Common myeloid progenitor, CD34-positive (primary cell): ENCODE measurements at regions of chr12 and their contacts with region 1.

Region 1: GRCh38 chr12:24997970-24998582 is 49.2 kb upstream of the BCAT1 start:
- DNase-seq: peak in 2 of 3 donors; percentile 21 to 50
- H3K4me3 ChIP-seq: no peak overlapping the region
- H3K27ac ChIP-seq: no peak overlapping the region
- H3K4me1 ChIP-seq: peaks cover 0 to 8% (median 0%) of the 10 kb centered on the region in 4 experiments
- H3K27me3 ChIP-seq: no peaks in the 10 kb centered on the region

Region 2: GRCh38 chr12:25009496-25010092 is 11.5 kb after region 1 on chr12:
- CTCF ChIA-PET with region 1: interaction called, 12 read pairs
- POLR2A ChIA-PET with region 1: no interaction called
- DNase-seq: no peak
- H3K4me3 ChIP-seq: no peak overlapping the region
- H3K27ac ChIP-seq: no peak overlapping the region
- H3K4me1 ChIP-seq: no peaks in the 10 kb centered on the region
- H3K27me3 ChIP-seq: no peaks in the 10 kb centered on the region

Region 3: DNA sequence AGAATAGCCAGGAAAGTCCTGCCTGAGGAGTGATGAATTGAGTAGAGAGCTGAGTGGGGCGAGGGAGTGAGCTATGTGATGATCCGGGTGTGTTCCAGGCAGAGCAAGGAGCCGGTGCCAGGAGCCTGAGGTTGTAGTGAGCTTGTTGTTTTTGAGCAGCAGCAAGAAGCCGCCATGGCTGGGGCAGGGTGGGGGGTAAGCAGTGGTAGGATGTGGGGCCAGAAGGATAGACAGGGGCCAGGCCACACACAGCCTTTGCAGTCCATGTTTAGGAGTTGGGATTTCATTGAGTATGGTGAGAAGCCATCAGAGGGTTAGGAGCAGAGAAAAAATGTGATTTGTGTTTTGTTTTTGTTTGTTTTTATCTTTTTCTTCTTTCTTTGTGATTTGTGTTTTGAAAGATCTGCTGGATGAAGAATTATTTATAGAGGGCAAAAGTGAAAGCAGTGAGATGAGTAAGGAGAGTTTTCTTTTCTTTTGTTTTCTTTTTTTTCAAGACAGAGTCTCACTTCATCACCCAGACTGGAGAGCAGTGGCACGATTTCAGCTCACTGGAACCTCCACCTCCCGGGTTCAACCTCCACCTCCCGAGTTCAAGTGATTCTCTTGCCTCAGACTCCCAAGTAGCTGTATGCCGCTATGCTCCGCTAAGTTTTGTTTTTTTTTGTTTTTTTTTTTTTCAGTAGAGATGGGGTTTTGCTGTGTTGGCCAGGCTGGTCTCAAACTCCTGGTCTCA is 43.1 kb after region 1 on chr12:
- CTCF ChIA-PET with region 1: no interaction called
- POLR2A ChIA-PET with region 1: no interaction called
- DNase-seq: peak in 1 of 3 donors; percentile 11
- H3K4me3 ChIP-seq: no peak overlapping the region
- H3K27ac ChIP-seq: no peak overlapping the region
- H3K4me1 ChIP-seq: peaks cover 0 to 5% (median 5%) of the 10 kb centered on the region in 4 experiments
- H3K27me3 ChIP-seq: no peaks in the 10 kb centered on the region